Caco-2 (cell line): ENCODE measurements at regions of chr17 and their contacts with region 1.

Region 1: GRCh38 chr17:56715613-56716357 is 117.9 kb downstream of the C17orf67 start:
- DNase-seq: peak; percentile 74 to 81
- H3K4me3 ChIP-seq: no peak overlapping the region
- H3K4me3 Mint-ChIP-seq: no peak overlapping the region
- H3K27ac Mint-ChIP-seq: no peak overlapping the region
- H3K4me1 ChIP-seq: no peaks in the 10 kb centered on the region
- H3K4me1 Mint-ChIP-seq: no peaks in the 10 kb centered on the region
- H3K27me3 ChIP-seq: peaks cover 1% of the 10 kb centered on the region
- H3K27me3 Mint-ChIP-seq: peaks cover 13% of the 10 kb centered on the region
- CTCF ChIP-seq: peak; percentile 79 to 86

Region 2: GRCh38 chr17:56499799-56500388 is 215.9 kb before region 1 on chr17:
- CTCF ChIA-PET with region 1: interaction called, 21 read pairs
- POLR2A ChIA-PET with region 1: no interaction called
- intact Hi-C with region 1: loop called (anchors 1 kb)
- DNase-seq: peak in 1 of 2 experiments; percentile 34
- H3K4me3 ChIP-seq: no peak overlapping the region
- H3K4me3 Mint-ChIP-seq: no peak overlapping the region
- H3K27ac Mint-ChIP-seq: no peak overlapping the region
- H3K4me1 ChIP-seq: no peaks in the 10 kb centered on the region
- H3K4me1 Mint-ChIP-seq: no peaks in the 10 kb centered on the region
- H3K27me3 ChIP-seq: no peaks in the 10 kb centered on the region
- H3K27me3 Mint-ChIP-seq: peaks cover 4% of the 10 kb centered on the region
- CTCF ChIP-seq: peak; percentile 28 to 29

Region 3: DNA sequence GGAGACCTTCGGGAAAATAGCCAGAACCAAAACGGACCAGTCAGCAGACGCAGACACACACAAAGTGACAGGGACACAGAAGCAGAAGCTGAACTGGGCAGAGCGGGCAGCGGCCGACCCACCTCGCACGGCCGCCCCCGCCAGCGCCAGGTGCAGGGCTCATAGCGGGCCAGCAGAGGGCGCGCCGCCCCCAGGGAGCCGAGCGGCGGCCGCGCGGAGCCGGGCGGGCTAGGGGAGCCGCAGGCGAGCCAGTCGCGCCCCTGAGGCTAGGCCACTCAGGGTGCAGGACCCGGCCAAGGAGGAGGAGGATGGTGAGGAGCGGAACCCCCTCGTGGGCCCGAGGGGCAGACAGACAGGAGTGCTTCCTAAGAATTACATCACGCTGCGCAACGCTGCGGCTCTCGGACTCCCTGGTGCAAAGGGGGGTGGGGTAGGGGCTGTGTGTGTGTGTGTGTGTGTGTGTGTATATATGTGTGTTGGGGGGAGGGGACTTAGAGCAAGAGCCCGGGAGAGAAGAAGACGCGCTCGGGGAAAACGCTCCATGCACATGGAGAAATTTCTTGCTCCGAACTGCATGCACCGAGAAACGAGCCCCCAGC is 123.2 kb before region 1 on chr17:
- CTCF ChIA-PET with region 1: interaction called, 57 read pairs
- POLR2A ChIA-PET with region 1: no interaction called
- intact Hi-C with region 1: loop called (anchors 1 kb)
- DNase-seq: peak; percentile 46 to 80
- H3K4me3 ChIP-seq: peak overlapping the region; percentile 28
- H3K4me3 Mint-ChIP-seq: peak overlapping the region; percentile 74
- H3K27ac Mint-ChIP-seq: no peak overlapping the region
- H3K4me1 ChIP-seq: peaks cover 24% of the 10 kb centered on the region
- H3K4me1 Mint-ChIP-seq: no peaks in the 10 kb centered on the region
- H3K27me3 ChIP-seq: peaks cover 10% of the 10 kb centered on the region
- H3K27me3 Mint-ChIP-seq: peaks cover 51% of the 10 kb centered on the region
- CTCF ChIP-seq: peak; percentile 64 to 96

Region 4: GRCh38 chr17:56653877-56654276 is 61.9 kb before region 1 on chr17:
- CTCF ChIA-PET with region 1: interaction called, 5 read pairs
- POLR2A ChIA-PET with region 1: no interaction called
- intact Hi-C with region 1: loop called (anchors 2 kb)
- DNase-seq: peak in 1 of 2 experiments; percentile 60
- H3K4me3 ChIP-seq: no peak overlapping the region
- H3K4me3 Mint-ChIP-seq: no peak overlapping the region
- H3K27ac Mint-ChIP-seq: no peak overlapping the region
- H3K4me1 ChIP-seq: no peaks in the 10 kb centered on the region
- H3K4me1 Mint-ChIP-seq: no peaks in the 10 kb centered on the region
- H3K27me3 ChIP-seq: no peaks in the 10 kb centered on the region
- H3K27me3 Mint-ChIP-seq: peaks cover 3% of the 10 kb centered on the region
- CTCF ChIP-seq: peak; percentile 57 to 72

Region 5: DNA sequence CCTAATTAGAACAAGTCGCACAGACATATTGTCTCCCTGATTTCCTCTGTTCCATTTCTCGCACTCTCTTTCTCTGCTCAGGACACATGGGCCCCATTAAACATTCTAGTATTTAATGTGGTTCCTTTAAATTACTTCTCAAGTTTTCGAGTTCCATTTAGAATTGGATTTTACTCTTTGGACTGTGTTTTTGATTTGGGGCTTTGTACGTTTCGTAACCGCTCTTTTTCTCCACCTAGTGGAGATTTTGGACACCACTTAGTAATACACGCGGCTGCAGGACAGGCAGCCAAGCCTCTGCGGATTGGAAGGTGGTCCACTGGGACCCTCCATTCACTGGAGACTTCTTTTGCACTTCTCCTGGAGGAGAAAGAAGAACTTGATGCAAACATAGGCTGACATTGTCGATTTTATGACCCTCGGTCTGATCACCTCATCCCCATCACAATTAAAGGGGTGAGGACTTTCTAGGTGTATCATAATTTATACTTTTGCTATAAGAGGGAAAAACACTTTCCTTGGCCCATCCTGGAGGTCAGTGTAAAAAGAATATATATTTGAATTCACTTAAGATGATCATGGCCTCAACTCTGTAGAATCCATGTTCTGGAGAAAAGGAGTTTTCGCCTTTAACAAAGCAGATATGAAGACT is 36.5 kb before region 1 on chr17:
- CTCF ChIA-PET with region 1: interaction called, 3 read pairs
- POLR2A ChIA-PET with region 1: no interaction called
- intact Hi-C with region 1: loop called (anchors 1 kb)
- DNase-seq: peak in 1 of 2 experiments; percentile 42
- H3K4me3 ChIP-seq: no peak overlapping the region
- H3K4me3 Mint-ChIP-seq: peak overlapping the region; percentile 50
- H3K27ac Mint-ChIP-seq: no peak overlapping the region
- H3K4me1 ChIP-seq: peaks cover 3% of the 10 kb centered on the region; the same call in 1 of the 2 replicates
- H3K4me1 Mint-ChIP-seq: peaks cover 6% of the 10 kb centered on the region
- H3K27me3 ChIP-seq: peaks cover 7% of the 10 kb centered on the region
- H3K27me3 Mint-ChIP-seq: peaks cover 26% of the 10 kb centered on the region
- CTCF ChIP-seq: peak; percentile 58 to 61

Region 6: GRCh38 chr17:56756536-56756935 is 40.8 kb after region 1 on chr17:
- CTCF ChIA-PET with region 1: no interaction called
- POLR2A ChIA-PET with region 1: no interaction called
- intact Hi-C with region 1: no loop called
- DNase-seq: no peak
- H3K4me3 ChIP-seq: no peak overlapping the region
- H3K4me3 Mint-ChIP-seq: no peak overlapping the region
- H3K27ac Mint-ChIP-seq: no peak overlapping the region
- H3K4me1 ChIP-seq: no peaks in the 10 kb centered on the region
- H3K4me1 Mint-ChIP-seq: no peaks in the 10 kb centered on the region
- H3K27me3 ChIP-seq: no peaks in the 10 kb centered on the region; the same call in 1 of the 2 replicates
- H3K27me3 Mint-ChIP-seq: peaks cover 16% of the 10 kb centered on the region
- CTCF ChIP-seq: no peak

Region 7: DNA sequence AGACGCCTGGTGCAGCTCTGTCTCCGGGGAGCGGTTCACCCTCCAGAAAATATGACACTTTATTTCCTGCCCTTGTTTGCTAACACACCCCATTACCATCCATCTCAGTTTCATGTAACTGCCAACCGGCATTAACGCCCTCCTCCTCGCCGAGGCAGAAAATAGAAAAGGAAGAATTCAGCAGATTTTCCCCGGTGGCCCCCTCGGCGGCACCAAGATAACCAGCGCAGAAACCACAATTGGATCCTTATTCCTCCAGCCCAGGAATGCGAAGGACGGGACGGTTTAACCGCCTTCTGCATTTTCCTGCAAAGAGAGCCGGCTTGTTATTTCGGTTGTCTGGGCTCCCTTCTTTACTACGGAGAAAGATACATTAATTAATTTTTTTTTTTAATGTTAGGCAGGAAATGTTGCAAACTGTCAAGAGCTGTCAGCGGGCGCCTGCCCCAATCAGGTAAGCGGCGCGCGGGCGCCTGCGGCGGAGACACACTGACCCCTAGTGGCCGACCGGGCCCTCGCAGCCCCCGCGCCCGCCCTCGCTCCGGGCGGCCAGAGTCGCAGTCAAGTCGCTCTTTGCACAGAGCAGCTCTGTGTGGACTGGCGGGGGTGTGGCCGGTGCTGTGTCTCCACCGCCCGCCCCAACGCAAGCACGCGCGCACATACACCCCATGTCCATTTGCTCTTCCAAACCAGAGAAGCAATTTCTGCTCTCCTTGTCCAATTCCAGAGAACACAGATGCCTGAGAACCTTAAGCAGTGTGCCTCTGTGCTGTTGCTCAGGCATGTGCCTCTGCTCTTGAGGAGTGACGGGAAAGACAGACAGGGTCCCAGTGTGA is 64.3 kb after region 1 on chr17:
- CTCF ChIA-PET with region 1: interaction called, 9 read pairs
- POLR2A ChIA-PET with region 1: no interaction called
- intact Hi-C with region 1: loop called (anchors 1 kb)
- DNase-seq: peak; percentile 75 to 90
- H3K4me3 ChIP-seq: peak overlapping the region; percentile 4; the same call in 1 of the 2 replicates
- H3K4me3 Mint-ChIP-seq: peak overlapping the region; percentile 54
- H3K27ac Mint-ChIP-seq: no peak overlapping the region
- H3K4me1 ChIP-seq: peaks cover 5% of the 10 kb centered on the region; the same call in 1 of the 2 replicates
- H3K4me1 Mint-ChIP-seq: peaks cover 6% of the 10 kb centered on the region
- H3K27me3 ChIP-seq: peaks cover 2% of the 10 kb centered on the region
- H3K27me3 Mint-ChIP-seq: peaks cover 34% of the 10 kb centered on the region
- CTCF ChIP-seq: peak; percentile 90 to 98